Panc1 (cell line): ENCODE measurements at regions of chr9 and their contacts with region 1.

Region 1: GRCh38 chr9:130665431-130666392 is 1.3 kb downstream of the PRDM12 start:
- DNase-seq: no peak
- ATAC-seq: no peak
- H3K4me3 ChIP-seq: no peak overlapping the region
- H3K27ac ChIP-seq: no peak overlapping the region
- H3K4me1 ChIP-seq: no peaks in the 10 kb centered on the region
- H3K27me3 ChIP-seq: peaks cover 2% of the 10 kb centered on the region; the same call in 1 of the 2 replicates
- CTCF ChIP-seq: no peak

Region 2: GRCh38 chr9:130467371-130467770 is 198.3 kb before region 1 on chr9:
- CTCF ChIA-PET with region 1: no interaction called
- POLR2A ChIA-PET with region 1: no interaction called
- in situ Hi-C with region 1: no loop called
- intact Hi-C with region 1: no loop called
- DNase-seq: no peak
- ATAC-seq: no peak
- H3K4me3 ChIP-seq: no peak overlapping the region
- H3K27ac ChIP-seq: no peak overlapping the region
- H3K4me1 ChIP-seq: no peaks in the 10 kb centered on the region
- H3K27me3 ChIP-seq: no peaks in the 10 kb centered on the region
- CTCF ChIP-seq: no peak

Region 3: GRCh38 chr9:130480331-130481072 is 185.2 kb before region 1 on chr9:
- CTCF ChIA-PET with region 1: interaction called, 12 read pairs
- POLR2A ChIA-PET with region 1: no interaction called
- in situ Hi-C with region 1: no loop called
- intact Hi-C with region 1: no loop called
- DNase-seq: no peak
- ATAC-seq: peak; percentile 66; the same call in 1 of the 2 replicates
- H3K4me3 ChIP-seq: no peak overlapping the region
- H3K27ac ChIP-seq: no peak overlapping the region
- H3K4me1 ChIP-seq: no peaks in the 10 kb centered on the region
- H3K27me3 ChIP-seq: no peaks in the 10 kb centered on the region
- CTCF ChIP-seq: no peak

Region 4: DNA sequence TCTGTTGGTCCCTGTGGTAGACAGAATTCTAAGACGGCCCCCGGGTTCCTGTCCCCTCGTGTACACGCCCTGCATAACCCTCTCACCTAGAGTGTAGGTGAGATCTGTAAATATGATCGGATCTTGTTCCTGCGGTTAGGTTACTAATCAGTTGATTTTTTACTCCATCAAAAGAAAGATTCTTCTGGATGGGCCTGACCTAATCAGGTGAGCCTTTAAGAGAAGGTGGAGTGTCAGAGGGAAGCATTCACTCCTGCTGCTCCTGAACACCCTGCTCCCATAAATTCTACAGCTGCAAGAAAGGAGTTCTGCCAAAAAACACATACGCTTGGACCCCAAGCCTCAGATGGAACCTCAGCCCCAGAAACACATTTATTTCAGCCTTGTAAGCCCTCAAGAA is 101.9 kb before region 1 on chr9:
- CTCF ChIA-PET with region 1: no interaction called
- POLR2A ChIA-PET with region 1: interaction called, 12 read pairs
- in situ Hi-C with region 1: no loop called
- intact Hi-C with region 1: no loop called
- DNase-seq: no peak
- ATAC-seq: no peak
- H3K4me3 ChIP-seq: no peak overlapping the region
- H3K27ac ChIP-seq: no peak overlapping the region
- H3K4me1 ChIP-seq: no peaks in the 10 kb centered on the region
- H3K27me3 ChIP-seq: no peaks in the 10 kb centered on the region
- CTCF ChIP-seq: no peak

Region 5: DNA sequence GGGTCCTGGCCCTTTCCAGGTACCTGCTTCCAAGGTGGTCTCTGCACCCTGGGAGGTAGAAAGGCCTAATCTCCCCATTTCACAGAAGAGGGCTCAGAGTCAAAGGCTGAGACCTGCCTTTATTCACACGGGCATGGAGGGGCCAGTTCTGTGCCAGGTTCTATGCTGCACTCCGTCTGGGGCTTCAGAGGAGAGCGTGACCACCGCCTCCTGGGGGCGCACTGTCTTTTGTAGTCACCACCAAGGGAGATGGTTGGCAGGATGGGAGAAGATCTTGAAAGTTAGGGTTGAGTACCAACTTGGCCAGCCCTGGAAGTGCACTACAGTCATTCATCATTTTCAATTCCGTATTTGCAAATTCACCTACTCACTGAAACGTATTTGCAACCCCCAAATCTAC is 25.0 kb before region 1 on chr9:
- CTCF ChIA-PET with region 1: no interaction called
- POLR2A ChIA-PET with region 1: interaction called, 13 read pairs
- in situ Hi-C with region 1: no loop called
- intact Hi-C with region 1: no loop called
- DNase-seq: no peak
- ATAC-seq: no peak
- H3K4me3 ChIP-seq: no peak overlapping the region
- H3K27ac ChIP-seq: no peak overlapping the region
- H3K4me1 ChIP-seq: no peaks in the 10 kb centered on the region
- H3K27me3 ChIP-seq: no peaks in the 10 kb centered on the region
- CTCF ChIP-seq: no peak

Region 6: GRCh38 chr9:130712564-130713285 is 47.0 kb after region 1 on chr9:
- CTCF ChIA-PET with region 1: no interaction called
- POLR2A ChIA-PET with region 1: no interaction called
- in situ Hi-C with region 1: no loop called
- intact Hi-C with region 1: no loop called
- DNase-seq: peak; percentile 90
- ATAC-seq: peak; percentile 98
- H3K4me3 ChIP-seq: peak overlapping the region; percentile 76
- H3K27ac ChIP-seq: peak overlapping the region; percentile 79
- H3K4me1 ChIP-seq: 0 out of 2 replicates have a peak, but pooled peaks cover 7% of the 10 kb centered on the region
- H3K27me3 ChIP-seq: no peaks in the 10 kb centered on the region
- CTCF ChIP-seq: no peak

Region 7: GRCh38 chr9:130785940-130786508 is 120.3 kb after region 1 on chr9:
- CTCF ChIA-PET with region 1: no interaction called
- POLR2A ChIA-PET with region 1: no interaction called
- in situ Hi-C with region 1: no loop called
- intact Hi-C with region 1: no loop called
- DNase-seq: no peak
- ATAC-seq: no peak
- H3K4me3 ChIP-seq: no peak overlapping the region
- H3K27ac ChIP-seq: no peak overlapping the region
- H3K4me1 ChIP-seq: peaks cover 4% of the 10 kb centered on the region
- H3K27me3 ChIP-seq: no peaks in the 10 kb centered on the region
- CTCF ChIP-seq: no peak